ENCODE measurements at regions of chr15 and their contacts with region 1.

Region 1: GRCh38 chr15:75023181-75023871 is at the start of gene PPCDC:
- DNase-seq: peak; percentile 97
- ATAC-seq: peak; percentile 100
- H3K4me3 Mint-ChIP-seq: peak within 1 kb of the TSS; percentile 89
- H3K27ac Mint-ChIP-seq: peak within 1 kb of the TSS; percentile 95
- H3K4me1 Mint-ChIP-seq: peaks cover 13% of the 10 kb centered on the region
- H3K27me3 Mint-ChIP-seq: no peaks in the 10 kb centered on the region
- total RNA-seq, gene PPCDC: 23.3 to 24.0 TPM

Region 2: DNA sequence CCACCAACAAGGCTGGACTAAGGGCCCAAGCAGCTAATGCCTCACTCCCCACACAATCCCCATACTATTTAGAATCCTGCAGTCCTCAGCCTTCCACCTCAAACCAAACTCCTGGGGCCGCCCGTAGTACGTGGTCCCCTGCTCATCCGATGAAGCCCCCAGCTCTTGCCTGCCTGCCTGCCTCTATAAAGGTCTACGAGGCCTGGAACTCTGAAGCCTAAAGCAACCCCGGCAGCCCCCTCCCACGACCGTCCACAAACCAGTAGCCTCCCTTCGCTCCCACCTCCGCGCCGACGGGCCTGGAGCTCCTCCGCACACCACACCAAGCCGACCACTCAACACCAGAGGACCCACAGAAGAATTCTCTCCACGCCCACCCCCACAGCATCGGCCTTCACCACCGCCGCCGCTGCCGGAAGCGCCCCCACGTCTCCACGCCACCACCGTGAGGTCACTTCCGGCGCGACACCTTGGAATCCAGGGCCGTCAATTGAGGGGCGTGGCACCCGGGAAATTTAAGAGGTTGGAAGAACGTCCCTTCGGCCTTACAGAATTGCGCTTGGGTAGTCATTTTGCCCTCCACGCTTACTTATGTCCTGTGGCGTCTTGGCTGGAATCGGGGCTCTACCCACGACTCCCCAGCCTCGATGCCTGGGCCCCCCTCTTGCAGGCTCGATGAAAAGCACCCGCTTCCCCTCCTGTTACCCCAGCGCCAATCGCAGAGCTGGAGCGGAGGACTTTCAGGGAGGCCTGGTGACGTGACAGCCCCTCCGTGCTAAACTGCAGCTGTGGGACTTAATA is 327.5 kb before region 1 on chr15 and contains the start of gene EDC3:
- CTCF ChIA-PET with region 1: no interaction called
- POLR2A ChIA-PET with region 1: no interaction called
- intact Hi-C with region 1: loop called in 1 of 2 experiments (anchors 5 kb)
- DNase-seq: peak; percentile 92
- ATAC-seq: peak; percentile 91
- H3K4me3 Mint-ChIP-seq: peak within 1 kb of the TSS; percentile 98
- H3K27ac Mint-ChIP-seq: peak within 1 kb of the TSS; percentile 99
- H3K4me1 Mint-ChIP-seq: peaks cover 27% of the 10 kb centered on the region
- H3K27me3 Mint-ChIP-seq: no peaks in the 10 kb centered on the region
- total RNA-seq, gene EDC3: 44.7 to 45.0 TPM

Region 3: GRCh38 chr15:74956648-74957300 is 66.6 kb before region 1 on chr15 and contains the start of gene RPP25:
- CTCF ChIA-PET with region 1: no interaction called
- POLR2A ChIA-PET with region 1: interaction called, 6 read pairs
- intact Hi-C with region 1: loop called (anchors 1 to 2 kb)
- DNase-seq: peak; percentile 85
- ATAC-seq: peak; percentile 84
- H3K4me3 Mint-ChIP-seq: peak within 1 kb of the TSS; percentile 65
- H3K27ac Mint-ChIP-seq: no peak within 1 kb of the TSS
- H3K4me1 Mint-ChIP-seq: peaks cover 46% of the 10 kb centered on the region
- H3K27me3 Mint-ChIP-seq: peaks cover 25% of the 10 kb centered on the region
- total RNA-seq, gene RPP25: 5.4 to 6.2 TPM

Region 4: DNA sequence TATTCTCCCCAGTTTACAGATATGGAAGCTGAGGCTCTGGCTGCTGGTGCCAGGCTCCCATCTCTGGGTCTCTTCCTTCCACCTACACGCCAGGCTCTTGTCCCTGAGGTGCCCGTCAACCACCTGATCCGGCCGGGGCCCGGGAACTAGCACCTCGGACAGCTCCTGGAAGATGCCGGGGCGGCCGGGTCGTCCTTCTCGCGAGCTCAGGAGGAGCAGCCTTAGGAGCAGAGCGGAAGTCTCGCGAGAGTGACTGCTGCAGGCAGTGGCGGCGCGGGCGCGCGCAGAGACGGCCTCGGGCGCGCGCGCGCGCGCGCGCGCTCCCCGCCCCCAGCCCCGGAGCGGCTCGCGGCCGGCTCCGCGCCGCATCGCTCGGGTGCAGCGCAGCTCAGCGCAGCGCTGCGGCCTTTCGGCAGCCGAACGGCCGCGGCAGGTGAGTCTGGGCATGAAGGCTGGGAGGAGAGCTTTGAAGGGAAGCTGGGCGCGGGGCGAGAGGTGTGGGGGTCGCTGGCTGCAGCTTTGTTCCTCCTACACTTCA is 28.0 kb before region 1 on chr15 and contains the start of gene SCAMP5:
- CTCF ChIA-PET with region 1: interaction called, 8 read pairs
- POLR2A ChIA-PET with region 1: interaction called, 10 read pairs
- intact Hi-C with region 1: loop called in 1 of 2 experiments (anchors 1 kb)
- DNase-seq: peak; percentile 98
- ATAC-seq: peak; percentile 98
- H3K4me3 Mint-ChIP-seq: peak within 1 kb of the TSS; percentile 69
- H3K27ac Mint-ChIP-seq: no peak within 1 kb of the TSS
- H3K4me1 Mint-ChIP-seq: peaks cover 16% of the 10 kb centered on the region
- H3K27me3 Mint-ChIP-seq: peaks cover 8% of the 10 kb centered on the region
- total RNA-seq, gene SCAMP5: 3.9 to 4.5 TPM

Region 5: GRCh38 chr15:75639709-75640482 is 616.6 kb after region 1 on chr15 and contains the start of gene IMP3:
- CTCF ChIA-PET with region 1: no interaction called
- POLR2A ChIA-PET with region 1: no interaction called
- intact Hi-C with region 1: loop called in 1 of 2 experiments (anchors 1 kb)
- DNase-seq: peak; percentile 96
- ATAC-seq: peak; percentile 92
- H3K4me3 Mint-ChIP-seq: peak within 1 kb of the TSS; percentile 99
- H3K27ac Mint-ChIP-seq: peak within 1 kb of the TSS; percentile 96
- H3K4me1 Mint-ChIP-seq: peaks cover 25% of the 10 kb centered on the region
- H3K27me3 Mint-ChIP-seq: no peaks in the 10 kb centered on the region
- total RNA-seq, gene IMP3: 80.3 to 87.5 TPM

Measured in activated CD4-positive, alpha-beta T cell treated with anti-CD3 and anti-CD28 coated beads for 36 hours (primary cell).